ENCODE measurements at regions of chr13 and their contacts with region 1.

Region 1: GRCh38 chr13:50911937-50912795 is 2.6 kb downstream of the RNASEH2B start:
- DNase-seq: peak; percentile 82 to 90 (median 83)
- H3K4me3 ChIP-seq: peak overlapping the region; percentile 73 to 92
- H3K4me3 Mint-ChIP-seq: peak overlapping the region; percentile 82 to 98 (median 94)
- H3K27ac ChIP-seq: peak overlapping the region; percentile 79
- H3K27ac Mint-ChIP-seq: peak overlapping the region; percentile 89 to 98 (median 95)
- H3K4me1 ChIP-seq: peaks cover 69% of the 10 kb centered on the region
- H3K4me1 Mint-ChIP-seq: peaks cover 43 to 59% (median 50%) of the 10 kb centered on the region in 4 donors
- H3K27me3 ChIP-seq: no peaks in the 10 kb centered on the region
- H3K27me3 Mint-ChIP-seq: peaks cover 0 to under 1% of the 10 kb centered on the region in 2 donors

Region 2: DNA sequence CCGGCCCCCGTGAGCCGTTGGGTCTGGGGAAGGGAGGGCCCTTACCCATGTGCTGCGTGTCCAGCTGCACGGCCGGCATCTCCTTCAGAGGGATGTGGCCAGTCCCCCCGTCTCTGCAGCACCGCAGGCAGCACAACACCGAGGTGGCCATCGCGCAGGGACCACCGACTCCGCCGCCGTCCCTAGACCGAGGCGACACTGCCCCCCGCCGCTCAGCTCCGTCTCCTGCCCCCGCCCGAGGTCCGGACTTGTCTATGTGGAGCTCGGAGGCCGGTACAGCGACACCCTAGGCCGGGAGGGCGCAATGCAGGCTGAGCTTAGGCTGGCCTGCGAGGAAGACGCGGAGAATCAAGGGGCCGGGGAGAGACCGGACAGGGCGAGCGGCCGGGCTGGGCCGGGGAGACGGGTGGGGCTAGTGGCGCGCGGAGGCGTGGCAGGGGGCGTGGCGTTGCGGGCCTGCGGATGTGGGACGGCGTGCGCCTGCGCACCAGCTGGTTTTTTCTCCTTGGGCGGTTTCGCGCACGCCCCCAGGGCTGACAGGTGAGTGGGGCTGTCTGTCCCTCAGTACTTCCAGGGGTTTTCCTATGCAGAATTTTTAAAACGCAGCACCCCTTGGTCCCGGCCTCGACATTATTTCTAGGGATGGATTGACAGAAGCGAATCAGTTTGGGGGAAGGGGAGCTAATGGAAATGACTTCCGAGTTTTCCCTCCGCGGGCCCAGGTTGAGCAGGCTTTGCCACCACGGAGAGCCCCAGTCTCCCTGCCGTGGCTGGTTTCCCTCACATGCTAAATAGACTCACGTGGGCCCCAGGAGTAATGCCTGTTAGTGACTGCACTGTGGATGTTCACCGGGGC is 975.9 kb before region 1 on chr13 and contains the start of gene SPRYD7:
- CTCF ChIA-PET with region 1: interaction called, 3 read pairs
- POLR2A ChIA-PET with region 1: interaction called, 11 read pairs
- intact Hi-C with region 1: loop called (anchors 1 kb)
- DNase-seq: peak; percentile 89 to 92 (median 92)
- H3K4me3 ChIP-seq: peak within 1 kb of the TSS; percentile 66 to 96
- H3K4me3 Mint-ChIP-seq: peak within 1 kb of the TSS; percentile 91 to 97 (median 95)
- H3K27ac ChIP-seq: peak within 1 kb of the TSS; percentile 63
- H3K27ac Mint-ChIP-seq: peak within 1 kb of the TSS; percentile 85 to 97 (median 94)
- H3K4me1 ChIP-seq: peaks cover 19% of the 10 kb centered on the region
- H3K4me1 Mint-ChIP-seq: peaks cover 12 to 23% (median 15%) of the 10 kb centered on the region in 4 donors
- H3K27me3 ChIP-seq: no peaks in the 10 kb centered on the region
- H3K27me3 Mint-ChIP-seq: no peaks in the 10 kb centered on the region
- total RNA-seq, gene SPRYD7: 3.3 to 5.1 TPM

Region 3: GRCh38 chr13:50170447-50171037 is 741.6 kb before region 1 on chr13:
- CTCF ChIA-PET with region 1: interaction called, 4 read pairs
- POLR2A ChIA-PET with region 1: no interaction called
- intact Hi-C with region 1: loop called (anchors 5 kb)
- DNase-seq: no peak
- H3K4me3 ChIP-seq: no peak overlapping the region
- H3K4me3 Mint-ChIP-seq: no peak overlapping the region
- H3K27ac ChIP-seq: no peak overlapping the region
- H3K27ac Mint-ChIP-seq: no peak overlapping the region
- H3K4me1 ChIP-seq: no peaks in the 10 kb centered on the region
- H3K4me1 Mint-ChIP-seq: peaks cover 0 to 7% (median 0%) of the 10 kb centered on the region in 4 donors
- H3K27me3 ChIP-seq: no peaks in the 10 kb centered on the region
- H3K27me3 Mint-ChIP-seq: no peaks in the 10 kb centered on the region

Region 4: DNA sequence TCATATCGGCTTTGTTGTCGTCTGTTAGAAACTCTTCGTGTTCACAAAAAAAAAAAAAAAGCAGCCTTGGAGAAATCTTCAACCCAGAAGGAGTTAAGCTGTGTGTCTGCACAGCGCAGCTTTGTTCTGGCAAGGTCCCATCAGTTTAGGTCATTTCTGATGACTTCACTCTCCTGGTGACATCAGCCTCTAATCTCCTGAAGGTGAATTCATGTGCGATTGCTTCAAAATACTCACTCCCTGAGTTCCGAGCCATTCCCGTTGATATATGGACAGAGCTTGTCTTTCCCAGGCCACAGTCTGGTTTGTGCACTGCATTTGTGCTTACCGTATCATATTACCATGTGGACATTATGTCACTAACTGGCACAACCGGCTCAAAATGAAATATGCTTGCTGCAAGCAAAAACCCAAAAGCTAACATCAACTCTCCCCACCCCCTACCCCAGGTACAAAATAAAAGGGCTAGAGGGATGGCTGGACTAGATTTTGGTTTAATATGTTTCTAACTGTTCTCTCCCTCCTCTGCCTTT is 554.5 kb before region 1 on chr13:
- CTCF ChIA-PET with region 1: interaction called, 3 read pairs
- POLR2A ChIA-PET with region 1: no interaction called
- intact Hi-C with region 1: loop called (anchors 5 kb)
- DNase-seq: no peak
- H3K4me3 ChIP-seq: no peak overlapping the region
- H3K4me3 Mint-ChIP-seq: peak overlapping the region in 1 of 8 donors; percentile 3
- H3K27ac ChIP-seq: no peak overlapping the region
- H3K27ac Mint-ChIP-seq: peak overlapping the region in 3 of 7 donors; percentile 18 to 63 (median 25)
- H3K4me1 ChIP-seq: peaks cover 56% of the 10 kb centered on the region
- H3K4me1 Mint-ChIP-seq: peaks cover 41 to 73% (median 58%) of the 10 kb centered on the region in 4 donors
- H3K27me3 ChIP-seq: no peaks in the 10 kb centered on the region
- H3K27me3 Mint-ChIP-seq: no peaks in the 10 kb centered on the region

Region 5: GRCh38 chr13:50531917-50532899 is 380.0 kb before region 1 on chr13:
- CTCF ChIA-PET with region 1: interaction called, 5 read pairs
- POLR2A ChIA-PET with region 1: no interaction called
- intact Hi-C with region 1: loop called (anchors 1 kb)
- DNase-seq: peak in 2 of 5 donors; percentile 14 to 18
- H3K4me3 ChIP-seq: no peak overlapping the region
- H3K4me3 Mint-ChIP-seq: no peak overlapping the region
- H3K27ac ChIP-seq: no peak overlapping the region
- H3K27ac Mint-ChIP-seq: no peak overlapping the region
- H3K4me1 ChIP-seq: peaks cover 18% of the 10 kb centered on the region
- H3K4me1 Mint-ChIP-seq: peaks cover 11 to 26% (median 22%) of the 10 kb centered on the region in 4 donors
- H3K27me3 ChIP-seq: no peaks in the 10 kb centered on the region
- H3K27me3 Mint-ChIP-seq: no peaks in the 10 kb centered on the region

Region 6: GRCh38 chr13:50810998-50811397 is 101.2 kb before region 1 on chr13:
- CTCF ChIA-PET with region 1: interaction called, 13 read pairs
- POLR2A ChIA-PET with region 1: no interaction called
- intact Hi-C with region 1: no loop called
- DNase-seq: no peak
- H3K4me3 ChIP-seq: no peak overlapping the region
- H3K4me3 Mint-ChIP-seq: no peak overlapping the region
- H3K27ac ChIP-seq: no peak overlapping the region
- H3K27ac Mint-ChIP-seq: no peak overlapping the region
- H3K4me1 ChIP-seq: no peaks in the 10 kb centered on the region
- H3K4me1 Mint-ChIP-seq: peaks cover 0 to 3% (median 0%) of the 10 kb centered on the region in 4 donors
- H3K27me3 ChIP-seq: no peaks in the 10 kb centered on the region
- H3K27me3 Mint-ChIP-seq: no peaks in the 10 kb centered on the region

Region 7: GRCh38 chr13:50898338-50898737 is 13.8 kb before region 1 on chr13:
- CTCF ChIA-PET with region 1: interaction called, 70 read pairs
- POLR2A ChIA-PET with region 1: interaction called, 181 read pairs
- intact Hi-C with region 1: loop called (anchors 1 kb)
- DNase-seq: no peak
- H3K4me3 ChIP-seq: no peak overlapping the region
- H3K4me3 Mint-ChIP-seq: no peak overlapping the region
- H3K27ac ChIP-seq: no peak overlapping the region
- H3K27ac Mint-ChIP-seq: no peak overlapping the region
- H3K4me1 ChIP-seq: peaks cover 15% of the 10 kb centered on the region
- H3K4me1 Mint-ChIP-seq: peaks cover 13 to 17% (median 15%) of the 10 kb centered on the region in 4 donors
- H3K27me3 ChIP-seq: no peaks in the 10 kb centered on the region
- H3K27me3 Mint-ChIP-seq: no peaks in the 10 kb centered on the region

Region 8: DNA sequence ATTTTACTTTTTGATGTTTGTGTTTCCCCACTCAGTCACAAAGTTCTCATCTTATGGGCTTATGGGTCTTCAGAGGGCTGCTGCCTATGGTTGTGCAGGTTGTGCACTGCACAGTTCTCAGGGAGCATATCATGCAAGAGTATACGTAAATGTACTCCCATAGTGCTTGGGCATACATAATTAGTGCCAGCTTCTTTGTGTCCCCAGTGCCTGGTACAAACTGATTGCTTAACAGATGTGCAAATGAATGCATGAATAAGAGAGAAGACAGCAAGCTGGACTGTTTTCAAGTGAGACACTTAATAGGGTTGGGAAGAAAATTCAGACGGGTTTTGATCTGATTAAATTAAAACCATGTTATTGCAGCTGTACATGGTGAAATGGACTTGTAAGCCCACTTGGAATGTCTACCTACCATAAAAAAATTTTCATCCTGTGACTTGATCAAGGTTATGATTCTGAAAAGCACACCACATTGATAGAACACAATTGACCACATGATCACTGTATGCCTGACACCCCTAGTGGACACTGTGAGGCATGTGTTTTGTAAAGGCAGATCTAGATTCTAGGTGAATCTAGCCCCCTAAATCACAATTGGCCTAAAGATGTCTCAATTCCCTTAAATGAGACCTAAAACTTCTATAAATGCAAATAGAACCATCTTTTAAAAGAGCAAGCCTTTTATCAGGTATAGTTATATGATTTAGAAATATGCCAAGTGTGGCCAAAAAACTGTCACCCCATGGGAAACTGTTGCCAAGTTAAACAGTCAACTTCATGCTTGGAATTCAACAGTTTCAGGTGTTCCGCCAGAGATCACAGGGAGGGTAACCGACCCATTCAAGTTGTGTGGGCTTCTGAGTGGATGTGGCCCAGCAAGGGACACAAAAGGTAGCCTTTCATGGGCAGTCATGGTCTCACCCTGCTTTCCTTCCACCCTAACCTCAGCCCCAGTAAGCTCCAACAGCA is 337.9 kb after region 1 on chr13:
- CTCF ChIA-PET with region 1: no interaction called
- POLR2A ChIA-PET with region 1: no interaction called
- intact Hi-C with region 1: no loop called
- DNase-seq: no peak
- H3K4me3 ChIP-seq: no peak overlapping the region
- H3K4me3 Mint-ChIP-seq: no peak overlapping the region
- H3K27ac ChIP-seq: no peak overlapping the region
- H3K27ac Mint-ChIP-seq: no peak overlapping the region
- H3K4me1 ChIP-seq: no peaks in the 10 kb centered on the region
- H3K4me1 Mint-ChIP-seq: no peaks in the 10 kb centered on the region
- H3K27me3 ChIP-seq: no peaks in the 10 kb centered on the region
- H3K27me3 Mint-ChIP-seq: peaks cover 6 to 12% of the 10 kb centered on the region in 2 donors